Posterior cingulate gyrus (tissue), 11 donors: ENCODE measurements at regions of chr1 and their contacts with region 1.

Region 1: GRCh38 chr1:241499910-241500309 is 19.6 kb downstream of the FH start:
- DNase-seq: no peak

Region 2: DNA sequence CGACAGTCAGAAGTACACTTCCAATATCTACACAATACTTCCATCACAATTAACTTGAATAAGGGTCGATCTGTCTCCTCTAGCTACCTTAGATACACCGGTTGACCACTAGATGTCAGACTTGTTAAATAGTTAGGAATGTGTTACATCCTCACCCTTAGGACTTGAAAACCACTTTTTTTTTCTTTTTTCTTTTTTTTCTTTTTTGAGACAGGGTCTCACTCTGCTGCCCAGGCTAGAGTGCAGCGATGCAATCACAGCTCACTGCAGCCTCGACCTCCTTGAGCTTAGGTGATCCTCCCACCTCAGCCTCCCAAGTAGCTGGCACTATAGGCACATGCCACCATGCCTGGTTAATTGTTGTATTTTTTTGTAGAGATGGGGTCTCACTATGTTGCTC is 767.5 kb before region 1 on chr1:
- intact Hi-C with region 1: loop called (anchors 5 kb)
- DNase-seq: no peak

Region 3: DNA sequence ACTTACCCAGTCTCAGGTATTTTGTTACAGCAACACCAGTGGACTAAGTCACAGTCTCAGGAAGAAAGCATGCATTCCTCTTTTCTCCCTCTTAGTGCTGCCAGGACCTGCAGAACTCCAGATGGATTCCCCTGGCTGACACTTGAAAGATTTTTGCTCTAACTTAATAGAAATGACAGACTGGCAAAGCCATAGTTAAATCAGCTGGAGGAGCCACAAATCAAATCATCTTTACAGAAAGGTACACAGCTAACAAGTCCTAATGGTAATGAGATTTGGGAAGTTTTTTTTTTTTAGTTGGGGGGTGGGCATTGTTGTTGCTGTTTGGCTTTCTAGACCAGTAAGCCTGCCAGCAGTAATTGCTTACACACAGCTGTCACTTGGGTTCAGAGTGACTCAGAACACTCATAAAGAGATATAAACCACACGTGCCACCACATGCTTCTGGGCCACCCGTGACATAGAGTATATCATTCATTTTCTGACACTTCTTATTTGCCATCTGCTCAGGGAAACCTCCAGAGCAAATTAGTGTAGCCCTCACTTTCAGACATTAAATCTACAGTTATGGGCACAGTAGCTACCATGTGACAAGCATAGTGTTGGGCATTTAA is 52.8 kb before region 1 on chr1:
- intact Hi-C with region 1: no loop called
- DNase-seq: no peak